AG04450 (cell line): ENCODE measurements at regions of chr5 and their contacts with region 1.

Region 1: GRCh38 chr5:141992349-141992963 is 20.4 kb downstream of the GNPDA1 start:
- DNase-seq: no peak
- H3K4me3 ChIP-seq: no peak overlapping the region
- H3K27ac ChIP-seq: no peak overlapping the region
- H3K27me3 ChIP-seq: no peaks in the 10 kb centered on the region
- CTCF ChIP-seq: peak; percentile 75

Region 2: GRCh38 chr5:141976176-141976575 is 16.3 kb before region 1 on chr5:
- CTCF ChIA-PET with region 1: interaction called, 26 read pairs
- POLR2A ChIA-PET with region 1: interaction called, 3 read pairs
- DNase-seq: no peak
- H3K4me3 ChIP-seq: no peak overlapping the region
- H3K27ac ChIP-seq: no peak overlapping the region
- H3K27me3 ChIP-seq: no peaks in the 10 kb centered on the region
- CTCF ChIP-seq: no peak

Region 3: GRCh38 chr5:142128675-142129208 is 136.3 kb after region 1 on chr5:
- CTCF ChIA-PET with region 1: interaction called, 14 read pairs
- POLR2A ChIA-PET with region 1: no interaction called
- DNase-seq: no peak
- H3K4me3 ChIP-seq: no peak overlapping the region
- H3K27ac ChIP-seq: no peak overlapping the region
- H3K27me3 ChIP-seq: no peaks in the 10 kb centered on the region
- CTCF ChIP-seq: no peak

Region 4: DNA sequence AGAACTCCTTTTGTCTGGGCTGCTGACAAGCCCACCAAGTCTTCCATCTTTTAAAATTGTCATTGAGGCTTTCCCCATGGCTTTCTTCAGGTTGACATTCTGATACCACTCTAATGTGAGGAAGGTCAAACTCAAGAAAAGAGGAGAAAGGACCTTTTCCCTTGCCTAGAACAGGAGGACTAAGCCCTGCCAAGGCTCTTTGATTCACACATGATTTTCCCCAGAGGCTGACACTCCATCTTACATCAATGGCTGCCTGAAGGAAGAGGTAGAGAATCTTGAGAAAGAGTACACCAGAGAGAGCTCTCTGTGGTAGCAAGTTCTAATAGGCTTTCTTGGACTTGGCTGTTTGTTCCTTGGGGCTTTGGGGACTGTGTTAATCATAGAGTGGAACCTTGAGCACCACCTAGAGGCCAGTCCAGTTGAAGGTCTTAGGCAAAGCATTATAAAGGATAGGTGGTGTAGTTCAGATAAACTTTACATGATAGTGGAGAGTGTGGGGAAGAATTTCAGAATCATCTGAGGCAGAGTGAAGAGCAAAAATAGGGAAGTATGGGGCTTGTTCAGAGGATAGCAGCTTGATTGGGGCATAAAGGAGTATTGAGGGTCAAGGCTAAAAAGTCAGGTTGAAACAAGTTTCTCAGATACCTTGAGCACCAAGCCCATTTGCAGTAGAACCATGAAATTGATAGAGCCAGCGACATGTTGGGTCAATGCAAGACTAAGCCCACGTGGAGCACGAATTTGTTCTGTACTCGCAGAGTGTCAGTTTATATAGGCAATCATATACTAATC is 152.8 kb after region 1 on chr5:
- CTCF ChIA-PET with region 1: interaction called, 165 read pairs
- POLR2A ChIA-PET with region 1: no interaction called
- DNase-seq: peak; percentile 16
- H3K4me3 ChIP-seq: no peak overlapping the region
- H3K27ac ChIP-seq: no peak overlapping the region
- H3K27me3 ChIP-seq: no peaks in the 10 kb centered on the region
- CTCF ChIP-seq: peak; percentile 81